Gastrocnemius medialis (tissue), 4 donors: ENCODE measurements at regions of chr17 and their contacts with region 1.

Region 1: GRCh38 chr17:56939901-56940343 is 20.9 kb downstream of the COIL start:
- DNase-seq: no peak
- ATAC-seq: peak; percentile 49 to 59
- H3K4me3 ChIP-seq: no peak overlapping the region
- H3K27ac ChIP-seq: no peak overlapping the region
- H3K4me1 ChIP-seq: no peaks in the 10 kb centered on the region
- H3K27me3 ChIP-seq: no peaks in the 10 kb centered on the region
- CTCF ChIP-seq: peak; percentile 57 to 71 (median 68)
- POLR2A ChIP-seq: no peak

Region 2: DNA sequence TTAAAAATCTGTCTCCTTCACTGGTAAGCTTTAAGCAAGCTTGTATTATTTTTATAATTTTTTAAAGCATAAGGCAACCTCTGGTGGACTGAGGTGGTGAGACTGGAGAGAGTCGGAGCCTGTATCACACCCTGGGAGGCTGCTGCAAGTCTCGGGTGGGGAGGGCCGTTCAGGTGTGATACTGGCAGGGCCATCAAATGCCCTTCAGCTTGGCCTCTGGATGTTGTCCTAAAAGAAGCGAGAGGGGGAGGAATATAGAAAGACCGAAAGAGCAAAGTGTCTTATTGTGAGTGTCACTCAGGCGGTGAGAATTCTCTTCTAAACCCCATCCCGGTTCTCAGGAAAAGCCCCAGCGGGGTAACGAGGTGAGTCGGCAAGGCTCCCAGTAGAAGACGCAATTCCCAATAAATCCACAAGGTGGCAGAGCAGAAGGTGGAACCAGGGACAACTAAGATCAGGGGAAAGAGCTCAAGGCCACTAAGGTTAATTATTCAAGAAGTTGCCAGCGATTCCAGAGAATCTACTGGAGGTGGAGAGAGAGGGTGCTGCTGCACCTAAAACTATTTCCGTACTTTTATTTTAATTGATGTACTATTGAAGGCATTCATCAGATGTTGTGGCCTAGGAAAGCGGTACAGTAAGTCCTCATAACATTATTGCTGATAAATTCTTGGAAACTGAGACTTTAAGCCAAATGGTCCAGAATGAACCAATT is 120.3 kb before region 1 on chr17:
- in situ Hi-C with region 1: loop called in 3 of 4 experiments (anchors 5 to 10 kb)
- intact Hi-C with region 1: loop called (anchors 1 kb)
- DNase-seq: peak; percentile 31 to 33
- ATAC-seq: peak; percentile 69 to 89
- H3K4me3 ChIP-seq: no peak overlapping the region
- H3K27ac ChIP-seq: no peak overlapping the region
- H3K4me1 ChIP-seq: no peaks in the 10 kb centered on the region
- H3K27me3 ChIP-seq: no peaks in the 10 kb centered on the region
- CTCF ChIP-seq: peak; percentile 75 to 89 (median 76)
- POLR2A ChIP-seq: no peak

Region 3: GRCh38 chr17:56891784-56892183 is 48.1 kb before region 1 on chr17:
- in situ Hi-C with region 1: no loop called
- intact Hi-C with region 1: loop called (anchors 1 kb)
- DNase-seq: no peak
- ATAC-seq: no peak
- H3K4me3 ChIP-seq: no peak overlapping the region
- H3K27ac ChIP-seq: no peak overlapping the region
- H3K4me1 ChIP-seq: no peaks in the 10 kb centered on the region
- H3K27me3 ChIP-seq: no peaks in the 10 kb centered on the region
- CTCF ChIP-seq: peak in 4 of 5 experiments; percentile 14 to 50 (median 40)
- POLR2A ChIP-seq: no peak

Region 4: DNA sequence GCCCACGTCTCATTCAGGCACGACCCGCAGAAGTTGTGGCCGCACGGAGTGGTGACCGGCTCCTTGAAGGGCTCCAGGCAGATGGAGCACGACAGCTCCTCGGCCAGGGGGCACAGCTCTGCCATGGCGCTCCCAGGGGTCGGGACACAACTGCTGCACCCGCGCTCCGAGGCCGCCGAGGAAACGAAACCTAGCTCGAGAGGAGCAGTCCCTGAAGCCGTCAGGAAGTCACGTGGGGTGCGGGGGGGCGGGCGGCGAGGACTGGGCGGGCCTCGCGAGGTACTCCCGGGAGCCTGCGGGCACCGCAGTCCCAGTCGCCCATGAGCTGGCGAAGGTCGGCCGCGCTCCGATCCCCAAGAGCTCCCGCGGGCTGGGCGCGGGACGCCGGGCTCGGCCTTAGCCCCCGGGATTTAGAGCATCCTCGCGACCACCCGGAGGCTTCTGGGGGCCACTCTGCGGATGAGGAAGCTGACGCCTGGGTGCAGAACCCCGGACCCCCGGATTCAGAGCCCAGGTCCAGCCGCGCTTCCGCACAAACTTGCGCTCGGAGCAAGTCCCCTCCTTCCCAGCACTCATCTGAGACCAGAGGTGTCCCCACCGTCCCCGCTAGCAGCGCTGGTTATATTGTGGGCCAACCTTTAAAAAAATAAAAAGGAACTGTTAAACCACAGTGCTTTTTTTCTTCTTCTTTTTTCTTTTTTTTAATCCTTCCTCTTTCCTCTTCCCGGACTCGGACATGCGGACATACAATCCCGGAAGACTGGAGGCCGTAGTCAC is 25.9 kb before region 1 on chr17 and contains the start of gene TRIM25:
- in situ Hi-C with region 1: no loop called
- intact Hi-C with region 1: loop called (anchors 1 kb)
- DNase-seq: peak; percentile 92 to 93
- ATAC-seq: peak; percentile 78 to 84
- H3K4me3 ChIP-seq: peak within 1 kb of the TSS; percentile 68 to 87 (median 74)
- H3K27ac ChIP-seq: peak within 1 kb of the TSS; percentile 85 to 95 (median 87)
- H3K4me1 ChIP-seq: peaks cover 53 to 54% of the 10 kb centered on the region in 2 donors
- H3K27me3 ChIP-seq: no peaks in the 10 kb centered on the region
- CTCF ChIP-seq: no peak
- POLR2A ChIP-seq: peak; percentile 98 to 99
- total RNA-seq, gene TRIM25: 8.5 to 18.2 (median 15.1) TPM